Posterior vena cava (tissue), 2 donors: ENCODE measurements at regions of chr18 and their contacts with region 1.

Region 1: GRCh38 chr18:9334329-9334972 is at the start of gene TWSG1:
- DNase-seq: peak; percentile 98
- total RNA-seq, gene TWSG1: 69.0 to 96.6 TPM

Region 2: GRCh38 chr18:9366192-9366591 is 31.7 kb after region 1 on chr18:
- intact Hi-C with region 1: no loop called
- DNase-seq: no peak

Region 3: DNA sequence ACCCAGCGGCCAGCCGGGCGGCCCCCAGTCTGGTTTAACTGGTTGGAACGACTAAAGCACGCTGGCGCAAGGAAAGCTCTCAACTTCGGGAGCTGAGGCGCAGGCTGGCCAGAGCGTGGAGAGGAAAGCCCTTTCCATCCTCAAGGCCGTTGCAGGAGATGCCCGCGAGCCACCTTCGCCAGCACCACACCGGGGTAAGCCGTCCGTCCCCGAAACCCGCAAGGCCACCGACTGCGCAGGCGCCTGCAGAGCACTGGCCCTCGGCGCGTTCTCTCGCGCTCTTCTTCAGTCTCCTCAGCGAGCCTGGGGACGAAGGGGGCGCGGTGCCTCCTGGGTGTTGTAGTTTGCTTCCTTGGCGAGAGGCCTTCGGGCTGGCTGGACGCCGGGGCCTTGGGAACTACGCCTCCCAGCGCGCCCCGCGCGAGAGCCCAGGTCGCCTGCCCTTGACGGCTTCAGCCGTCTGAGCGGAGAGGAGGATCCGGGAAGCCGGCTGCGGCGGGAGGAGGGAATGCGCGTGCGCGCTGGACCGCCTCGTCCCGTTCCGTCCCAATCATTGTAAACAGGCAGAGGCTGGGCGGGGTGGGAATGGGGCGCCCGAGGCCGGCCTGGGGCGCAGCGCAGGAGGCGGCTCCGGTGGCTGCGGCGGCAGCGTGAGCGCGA is 140.7 kb after region 1 on chr18 and contains the start of gene RALBP1:
- intact Hi-C with region 1: loop called in 1 of 2 experiments (anchors 10 kb)
- DNase-seq: peak; percentile 100
- total RNA-seq, gene RALBP1: 41.4 to 50.4 TPM